HEK293T (cell line): ENCODE measurements at regions of chr6 and their contacts with region 1.

Region 1: GRCh38 chr6:43181942-43182860 is at the start of gene CUL9:
- DNase-seq: peak; percentile 66

Region 2: DNA sequence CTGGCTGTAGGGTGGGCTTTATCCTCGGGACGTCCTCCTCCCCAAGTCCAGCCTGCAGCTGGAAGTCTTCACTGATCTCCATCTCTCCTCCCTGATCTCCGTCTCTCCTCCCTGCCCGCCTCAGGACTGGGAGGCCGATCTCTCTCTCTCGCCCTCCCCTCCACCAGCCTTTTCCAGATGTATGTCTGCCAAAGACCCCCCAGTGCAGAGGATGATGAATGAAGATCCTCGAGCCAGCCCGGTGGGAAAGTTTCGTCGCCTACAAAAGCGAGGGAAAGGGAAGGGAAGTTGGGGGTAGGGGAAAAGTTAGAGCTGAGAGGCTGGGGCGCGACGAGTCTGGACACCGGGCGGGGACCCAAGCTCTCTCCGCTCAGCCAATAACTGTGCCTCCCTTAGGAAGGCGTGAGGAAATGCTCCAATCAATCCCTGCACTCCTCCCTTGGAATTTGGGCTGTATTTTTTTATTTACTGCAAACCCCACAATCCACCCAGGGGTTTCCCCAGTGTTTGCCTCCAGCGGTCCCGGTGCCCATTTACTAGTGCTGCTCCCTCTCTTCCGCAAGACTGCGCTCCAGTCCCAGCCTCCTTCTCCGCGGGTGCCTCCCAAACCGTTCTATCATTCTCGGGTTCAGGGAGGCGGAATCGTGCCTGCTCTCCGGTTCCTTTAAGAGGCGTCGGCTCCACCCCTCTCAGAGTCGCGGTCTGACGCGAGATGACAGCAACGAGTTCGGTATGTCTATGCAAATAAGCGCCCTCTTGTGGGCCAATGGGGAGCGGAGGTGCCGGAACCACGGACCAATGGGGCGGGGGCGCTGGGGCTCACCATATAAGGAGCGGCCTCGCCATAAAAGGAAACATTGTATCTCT is 11.6 kb before region 1 on chr6 and contains the start of gene SRF:
- CTCF ChIA-PET with region 1: no interaction called
- POLR2A ChIA-PET with region 1: interaction called, 30 read pairs
- DNase-seq: peak; percentile 91

Region 3: DNA sequence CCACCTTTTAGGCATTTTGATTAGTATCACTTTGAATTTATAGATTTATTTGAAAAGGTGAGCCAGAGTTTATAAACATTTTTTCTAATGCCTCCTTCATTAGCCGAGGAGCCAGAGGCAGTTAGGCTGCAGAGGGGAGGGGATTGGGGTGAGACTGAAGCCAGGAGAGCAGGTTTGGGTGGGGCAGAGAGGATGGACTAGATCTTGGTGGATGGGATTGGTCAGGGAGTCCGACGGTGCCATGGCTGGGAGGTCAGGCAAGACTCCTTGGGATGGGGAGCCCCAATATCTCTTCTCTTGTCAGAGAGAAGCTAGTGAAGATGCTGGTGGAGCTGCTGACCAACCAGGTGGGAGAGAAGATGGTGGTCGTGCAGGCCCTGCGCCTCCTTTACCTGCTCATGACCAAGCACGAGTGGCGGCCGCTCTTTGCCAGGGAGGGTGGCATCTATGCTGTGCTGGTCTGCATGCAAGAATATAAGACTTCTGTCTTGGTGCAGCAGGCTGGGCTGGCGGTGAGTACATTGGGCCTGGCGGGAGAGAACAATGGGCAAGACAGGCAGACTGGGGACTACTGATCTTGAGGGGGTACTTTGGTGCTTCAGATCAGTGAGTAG is 10.6 kb after region 1 on chr6:
- CTCF ChIA-PET with region 1: no interaction called
- POLR2A ChIA-PET with region 1: interaction called, 18 read pairs
- DNase-seq: no peak

Region 4: GRCh38 chr6:43247113-43247999 is 65.2 kb after region 1 on chr6:
- CTCF ChIA-PET with region 1: no interaction called
- POLR2A ChIA-PET with region 1: interaction called, 10 read pairs
- DNase-seq: peak; percentile 95